B cell (primary cell): ENCODE measurements at regions of chrX and their contacts with region 1.

Region 1: DNA sequence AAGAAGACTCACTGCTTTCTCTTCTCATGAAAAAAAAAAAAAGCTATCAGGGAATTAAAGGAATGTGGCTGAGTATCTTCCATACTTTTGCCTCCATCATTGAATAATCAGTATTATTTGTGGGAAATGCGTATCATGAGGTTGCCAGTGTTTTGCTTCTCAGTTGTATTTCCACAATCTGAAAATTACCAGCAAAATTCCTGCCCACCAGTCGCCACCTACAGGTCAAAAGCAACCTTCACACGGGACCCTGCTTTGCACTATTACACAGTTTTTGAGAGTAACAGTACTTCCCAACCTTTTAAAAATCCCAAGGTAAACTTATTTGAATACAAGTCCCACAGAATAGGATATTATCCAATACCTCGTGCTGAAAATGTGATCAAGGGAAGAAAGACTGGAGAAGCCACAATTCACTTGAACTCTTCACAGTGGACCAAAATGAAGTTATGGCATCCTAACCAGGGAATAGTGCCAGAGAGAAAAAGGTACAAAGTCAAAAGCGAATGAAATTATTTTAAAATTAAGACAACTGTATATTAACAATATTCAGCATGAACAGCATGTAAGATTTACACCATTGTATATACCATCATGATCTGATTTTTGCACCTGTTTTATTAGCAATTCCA is 30.4 kb downstream of the PGRMC1 start:
- DNase-seq: peak; percentile 27
- ATAC-seq: no peak
- H3K4me3 ChIP-seq: no peak overlapping the region
- H3K4me3 Mint-ChIP-seq: no peak overlapping the region
- H3K27ac ChIP-seq: no peak overlapping the region
- H3K27ac Mint-ChIP-seq: no peak overlapping the region
- H3K4me1 ChIP-seq: no peaks in the 10 kb centered on the region
- H3K4me1 Mint-ChIP-seq: peaks cover 2% of the 10 kb centered on the region
- H3K27me3 ChIP-seq: peaks cover 0 to 2% (median 0%) of the 10 kb centered on the region in 4 experiments
- H3K27me3 Mint-ChIP-seq: peaks cover 8% of the 10 kb centered on the region
- CTCF ChIP-seq: peak; percentile 68

Region 2: DNA sequence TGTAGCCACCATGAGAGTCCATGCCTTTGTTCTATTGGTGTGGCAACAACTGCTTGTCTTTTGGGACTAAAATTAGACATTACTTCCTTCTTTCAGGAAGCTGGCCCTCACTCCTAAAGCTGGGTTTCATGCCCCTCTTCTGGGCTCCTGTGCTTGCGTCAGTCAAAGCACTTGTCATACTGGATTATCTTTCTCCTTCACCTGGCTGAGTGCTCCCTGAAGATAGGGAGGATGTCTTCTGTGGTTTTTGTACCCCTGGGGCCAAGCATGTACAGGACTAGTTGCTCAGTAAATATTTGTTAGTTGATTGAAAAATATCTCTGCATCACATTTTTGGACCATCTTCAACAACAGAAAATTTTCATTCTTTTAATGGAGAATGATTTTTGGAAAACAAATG is 318.2 kb before region 1 on chrX:
- CTCF ChIA-PET with region 1: no interaction called
- POLR2A ChIA-PET with region 1: no interaction called
- intact Hi-C with region 1: no loop called
- DNase-seq: no peak
- ATAC-seq: no peak
- H3K4me3 ChIP-seq: no peak overlapping the region
- H3K4me3 Mint-ChIP-seq: no peak overlapping the region
- H3K27ac ChIP-seq: no peak overlapping the region
- H3K27ac Mint-ChIP-seq: no peak overlapping the region
- H3K4me1 ChIP-seq: no peaks in the 10 kb centered on the region
- H3K4me1 Mint-ChIP-seq: no peaks in the 10 kb centered on the region
- H3K27me3 ChIP-seq: no peaks in the 10 kb centered on the region
- H3K27me3 Mint-ChIP-seq: no peaks in the 10 kb centered on the region
- CTCF ChIP-seq: no peak

Region 3: DNA sequence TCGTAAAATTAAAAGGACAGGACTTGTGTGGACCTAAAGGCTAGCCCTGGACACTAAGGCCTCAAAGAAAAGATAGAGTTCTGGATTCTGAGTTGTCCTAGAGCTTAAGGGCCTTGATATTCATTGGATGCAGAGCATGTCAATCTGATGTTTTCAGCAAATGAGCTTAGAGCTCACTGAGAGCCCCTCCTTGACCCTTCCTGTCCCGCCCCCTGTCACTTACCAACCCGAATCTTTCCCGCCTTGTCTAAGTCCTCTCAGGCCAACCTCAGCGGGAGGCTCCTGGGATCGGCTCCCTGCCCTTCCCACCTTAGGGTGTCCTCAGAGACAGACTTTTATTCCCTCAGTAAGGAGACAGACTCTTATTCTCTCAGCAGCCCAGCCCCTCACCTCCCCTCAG is 193.7 kb before region 1 on chrX and contains the start of gene CT47C1:
- CTCF ChIA-PET with region 1: no interaction called
- POLR2A ChIA-PET with region 1: no interaction called
- intact Hi-C with region 1: no loop called
- DNase-seq: no peak
- ATAC-seq: no peak
- H3K4me3 ChIP-seq: no peak within 1 kb of the TSS
- H3K4me3 Mint-ChIP-seq: no peak within 1 kb of the TSS
- H3K27ac ChIP-seq: peak within 1 kb of the TSS in 1 of 2 donors; percentile 22
- H3K27ac Mint-ChIP-seq: peak within 1 kb of the TSS; percentile 83
- H3K4me1 ChIP-seq: peaks cover 11 to 15% of the 10 kb centered on the region in 2 donors
- H3K4me1 Mint-ChIP-seq: peaks cover 14% of the 10 kb centered on the region
- H3K27me3 ChIP-seq: no peaks in the 10 kb centered on the region
- H3K27me3 Mint-ChIP-seq: peaks cover 4% of the 10 kb centered on the region
- CTCF ChIP-seq: no peak
- total RNA-seq, gene CT47C1: not detected in 2 replicates

Region 4: GRCh38 chrX:119118780-119119395 is 147.6 kb before region 1 on chrX:
- CTCF ChIA-PET with region 1: interaction called, 17 read pairs
- POLR2A ChIA-PET with region 1: no interaction called
- intact Hi-C with region 1: loop called (anchors 1 kb)
- DNase-seq: peak; percentile 59
- ATAC-seq: peak; percentile 69
- H3K4me3 ChIP-seq: no peak overlapping the region
- H3K4me3 Mint-ChIP-seq: no peak overlapping the region
- H3K27ac ChIP-seq: no peak overlapping the region
- H3K27ac Mint-ChIP-seq: no peak overlapping the region
- H3K4me1 ChIP-seq: no peaks in the 10 kb centered on the region
- H3K4me1 Mint-ChIP-seq: no peaks in the 10 kb centered on the region
- H3K27me3 ChIP-seq: peaks cover 0 to 2% (median 0%) of the 10 kb centered on the region in 4 experiments
- H3K27me3 Mint-ChIP-seq: peaks cover 8% of the 10 kb centered on the region
- CTCF ChIP-seq: peak; percentile 74

Region 5: GRCh38 chrX:119502727-119503483 is 236.4 kb after region 1 on chrX:
- CTCF ChIA-PET with region 1: no interaction called
- POLR2A ChIA-PET with region 1: no interaction called
- intact Hi-C with region 1: no loop called
- DNase-seq: no peak
- ATAC-seq: no peak
- H3K4me3 ChIP-seq: no peak overlapping the region
- H3K4me3 Mint-ChIP-seq: no peak overlapping the region
- H3K27ac ChIP-seq: no peak overlapping the region
- H3K27ac Mint-ChIP-seq: no peak overlapping the region
- H3K4me1 ChIP-seq: peaks cover 0 to 19% of the 10 kb centered on the region in 2 donors
- H3K4me1 Mint-ChIP-seq: peaks cover 9% of the 10 kb centered on the region
- H3K27me3 ChIP-seq: no peaks in the 10 kb centered on the region
- H3K27me3 Mint-ChIP-seq: no peaks in the 10 kb centered on the region
- CTCF ChIP-seq: no peak